ENCODE measurements at regions of chr10 and their contacts with region 1.

Region 1: GRCh38 chr10:119750391-119751230 is 24.8 kb downstream of the INPP5F start:
- DNase-seq: peak; percentile 75 to 78
- H3K4me3 ChIP-seq: no peak overlapping the region
- H3K27ac ChIP-seq: no peak overlapping the region
- H3K4me1 ChIP-seq: no peaks in the 10 kb centered on the region
- H3K27me3 ChIP-seq: no peaks in the 10 kb centered on the region
- CTCF ChIP-seq: peak; percentile 79 to 93 (median 90)
- POLR2A ChIP-seq: no peak

Region 2: GRCh38 chr10:119693262-119693957 is 57.2 kb before region 1 on chr10:
- intact Hi-C with region 1: no loop called
- DNase-seq: no peak
- H3K4me3 ChIP-seq: no peak overlapping the region
- H3K27ac ChIP-seq: no peak overlapping the region
- H3K4me1 ChIP-seq: no peaks in the 10 kb centered on the region
- H3K27me3 ChIP-seq: no peaks in the 10 kb centered on the region
- CTCF ChIP-seq: no peak
- POLR2A ChIP-seq: no peak

Region 3: DNA sequence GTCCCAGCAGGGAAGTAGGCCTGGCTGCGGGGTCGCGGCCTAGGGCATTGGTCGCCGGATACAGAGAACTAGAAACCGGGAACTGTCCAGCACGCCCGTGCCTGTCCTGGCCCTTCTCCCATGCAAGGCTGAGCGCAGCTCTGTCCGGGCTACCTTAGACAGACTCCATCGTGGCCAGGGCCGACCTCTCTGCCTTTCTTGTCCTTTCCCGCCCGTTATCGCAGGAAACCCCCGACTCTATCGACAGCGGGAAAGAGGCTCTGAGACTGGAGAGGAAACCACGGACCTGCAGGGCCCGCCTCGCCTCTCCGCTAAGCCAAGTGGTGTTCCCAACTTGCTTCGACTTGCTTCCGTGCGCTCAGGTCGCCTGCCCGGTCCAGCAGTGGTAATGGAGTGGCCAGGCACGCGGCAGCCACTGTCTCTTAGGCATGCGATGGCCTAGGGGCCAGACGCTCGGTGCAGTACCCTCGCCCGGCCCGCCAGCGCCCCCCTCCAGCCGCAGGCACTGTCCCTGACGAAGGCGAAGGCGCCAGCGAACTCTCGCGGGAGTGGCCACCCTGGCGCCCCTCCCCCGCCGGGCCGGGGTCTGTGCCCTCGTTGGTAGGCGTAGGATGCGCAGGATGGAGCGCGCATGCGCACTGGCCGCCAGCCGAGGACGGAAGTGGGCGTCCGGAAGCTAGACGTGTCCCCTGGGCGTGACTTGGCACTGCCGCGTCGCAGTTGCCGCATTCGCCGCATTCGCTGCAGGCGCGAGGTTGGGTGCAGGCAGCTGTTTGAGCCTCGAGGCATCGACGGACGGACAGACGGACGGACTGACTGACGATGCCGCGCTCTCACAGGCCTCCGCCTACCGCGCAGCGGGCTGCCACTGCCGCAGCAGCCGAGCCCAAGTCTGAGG is 67.6 kb after region 1 on chr10:
- intact Hi-C with region 1: loop called (anchors 10 kb)
- DNase-seq: peak; percentile 71
- H3K4me3 ChIP-seq: peak overlapping the region in 1 of 3 donors; percentile 21
- H3K27ac ChIP-seq: no peak overlapping the region
- H3K4me1 ChIP-seq: no peaks in the 10 kb centered on the region
- H3K27me3 ChIP-seq: no peaks in the 10 kb centered on the region
- CTCF ChIP-seq: peak in 1 of 6 experiments; percentile 9
- POLR2A ChIP-seq: peak in 1 of 2 donors; percentile 35

Region 4: GRCh38 chr10:119867317-119867716 is 116.7 kb after region 1 on chr10:
- intact Hi-C with region 1: loop called (anchors 5 kb)
- DNase-seq: no peak
- H3K4me3 ChIP-seq: no peak overlapping the region
- H3K27ac ChIP-seq: no peak overlapping the region
- H3K4me1 ChIP-seq: peaks cover 11 to 13% of the 10 kb centered on the region in 2 donors
- H3K27me3 ChIP-seq: no peaks in the 10 kb centered on the region
- CTCF ChIP-seq: no peak
- POLR2A ChIP-seq: no peak

Measured in thyroid gland (tissue), 4 donors.